ENCODE measurements at regions of chr6 and their contacts with region 1.

Region 1: DNA sequence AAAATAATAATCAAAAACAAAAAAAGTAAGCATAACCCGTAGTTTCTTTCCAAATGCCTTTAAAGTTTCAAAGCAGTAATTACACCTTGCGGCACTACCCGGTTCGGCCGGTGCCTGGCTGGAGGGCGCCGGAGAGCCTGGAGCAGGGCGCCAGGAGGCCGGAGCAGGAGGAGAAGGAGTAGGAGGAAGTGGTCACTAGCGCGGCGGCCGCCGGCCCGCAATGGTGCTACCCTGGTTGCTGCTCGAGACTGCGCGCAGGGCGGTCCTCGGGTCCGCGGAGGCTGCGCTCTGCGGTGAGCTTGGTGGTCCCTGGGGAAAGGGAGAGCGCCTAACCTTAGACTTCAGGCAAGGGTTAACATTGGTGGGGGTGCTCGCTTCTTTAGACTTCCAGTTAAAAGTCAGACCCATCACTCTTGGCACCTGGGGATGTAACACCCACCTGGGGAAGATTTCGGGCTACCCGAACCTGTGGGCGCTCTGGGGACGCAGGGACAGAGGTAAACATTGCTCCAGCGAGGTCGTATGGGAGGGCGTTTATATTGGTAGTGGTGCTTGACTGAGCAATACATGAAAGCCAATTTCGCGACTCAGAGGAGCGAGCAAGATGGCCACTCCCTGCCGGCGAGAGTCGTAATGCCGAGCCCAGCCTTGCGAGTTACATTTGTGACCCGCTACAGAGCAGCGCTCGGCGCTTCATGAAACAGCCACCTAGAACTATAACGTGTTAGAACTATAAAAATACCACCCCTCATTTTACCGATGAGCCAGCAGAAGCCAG is 5.8 kb upstream of the USP45 start:
- DNase-seq: peak; percentile 92
- H3K4me3 ChIP-seq: peak overlapping the region; percentile 63 to 72 (median 70)
- H3K27ac ChIP-seq: peak overlapping the region; percentile 90 to 91 (median 90)
- H3K4me1 ChIP-seq: peaks cover 0 to 19% (median 15%) of the 10 kb centered on the region in 4 donors
- H3K27me3 ChIP-seq: no peaks in the 10 kb centered on the region
- CTCF ChIP-seq: peak; percentile 76 to 94 (median 86)
- EP300 ChIP-seq: peak in 1 of 4 donors; percentile 4
- POLR2A ChIP-seq: peak; percentile 75 to 84

Region 2: GRCh38 chr6:99369533-99369932 is 151.5 kb before region 1 on chr6:
- intact Hi-C with region 1: no loop called
- DNase-seq: no peak
- H3K4me3 ChIP-seq: no peak overlapping the region
- H3K27ac ChIP-seq: no peak overlapping the region
- H3K4me1 ChIP-seq: no peaks in the 10 kb centered on the region
- H3K27me3 ChIP-seq: no peaks in the 10 kb centered on the region
- CTCF ChIP-seq: no peak
- EP300 ChIP-seq: no peak
- POLR2A ChIP-seq: no peak

Region 3: DNA sequence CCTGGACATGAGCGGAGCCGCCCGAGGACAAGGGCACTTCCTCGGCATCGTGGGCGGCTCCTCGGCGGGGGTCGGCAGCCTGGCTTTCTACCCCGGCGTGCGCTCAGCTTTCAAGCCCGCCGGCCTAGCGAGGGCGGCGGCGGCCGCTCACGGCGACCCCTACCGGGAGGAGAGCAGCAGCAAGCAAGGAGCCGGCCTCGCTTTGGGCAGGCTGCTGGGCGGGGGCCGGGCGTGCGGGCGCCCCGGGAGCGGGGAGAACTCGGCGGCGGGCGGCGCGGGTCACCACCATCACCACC is 92.3 kb after region 1 on chr6:
- intact Hi-C with region 1: loop called (anchors 5 kb)
- DNase-seq: no peak
- H3K4me3 ChIP-seq: peak overlapping the region; percentile 8 to 53 (median 48)
- H3K27ac ChIP-seq: no peak overlapping the region
- H3K4me1 ChIP-seq: peaks cover 0 to 25% (median 22%) of the 10 kb centered on the region in 4 donors
- H3K27me3 ChIP-seq: peaks cover 50 to 100% (median 98%) of the 10 kb centered on the region in 3 donors
- CTCF ChIP-seq: peak in 1 of 4 experiments; percentile 45
- EP300 ChIP-seq: no peak
- POLR2A ChIP-seq: no peak

Measured in sigmoid colon (tissue), 7 donors.